ENCODE measurements at regions of chr6 and their contacts with region 1.

Region 1: DNA sequence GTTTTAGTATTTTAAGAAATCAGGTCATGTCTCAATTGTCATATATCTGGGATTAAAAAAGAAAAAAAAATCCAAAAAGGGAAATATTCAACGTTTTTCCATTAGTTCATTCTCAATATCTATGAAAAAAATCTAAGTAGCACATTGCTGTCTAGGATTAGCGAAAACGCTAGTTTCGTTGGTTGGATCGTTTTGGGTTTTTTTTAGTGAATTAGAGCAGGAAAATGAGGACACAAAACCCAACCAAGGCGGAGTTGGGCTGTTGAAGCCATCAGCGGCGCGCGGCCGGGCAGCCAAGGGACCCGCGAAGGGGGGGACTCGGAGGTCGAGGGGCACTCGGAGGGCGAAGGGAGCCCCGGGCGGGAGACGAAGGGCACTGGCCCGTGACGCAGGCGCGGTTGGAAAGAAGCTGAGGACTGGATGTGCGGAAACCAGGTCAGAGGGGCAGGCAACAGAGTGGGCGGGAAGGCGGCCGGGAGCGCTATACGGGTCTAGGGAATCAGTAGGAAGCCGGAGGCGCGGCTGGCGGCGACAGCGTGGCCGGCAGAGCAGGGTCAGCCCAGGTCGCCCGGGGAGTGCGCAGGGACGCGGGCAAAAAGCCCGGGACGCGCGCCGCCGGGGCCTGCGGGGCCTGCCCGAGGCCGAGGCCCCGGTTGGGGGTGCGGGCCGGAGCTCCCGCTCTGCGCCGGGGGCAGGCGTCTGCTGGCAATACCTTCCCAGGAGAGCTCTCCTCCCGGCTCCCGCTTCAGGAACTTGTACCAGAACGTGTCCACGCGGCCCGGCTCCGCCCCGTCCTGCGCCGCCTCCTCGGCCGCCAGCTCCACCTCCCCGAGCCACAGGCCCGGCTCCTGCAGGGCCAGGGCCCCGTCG is 599 bp downstream of the EPM2A start:
- DNase-seq: peak; percentile 71
- H3K4me3 Mint-ChIP-seq: peak overlapping the region; percentile 90
- H3K27ac Mint-ChIP-seq: peak overlapping the region; percentile 88
- H3K4me1 Mint-ChIP-seq: peaks cover 21% of the 10 kb centered on the region
- H3K27me3 Mint-ChIP-seq: no peaks in the 10 kb centered on the region

Region 2: DNA sequence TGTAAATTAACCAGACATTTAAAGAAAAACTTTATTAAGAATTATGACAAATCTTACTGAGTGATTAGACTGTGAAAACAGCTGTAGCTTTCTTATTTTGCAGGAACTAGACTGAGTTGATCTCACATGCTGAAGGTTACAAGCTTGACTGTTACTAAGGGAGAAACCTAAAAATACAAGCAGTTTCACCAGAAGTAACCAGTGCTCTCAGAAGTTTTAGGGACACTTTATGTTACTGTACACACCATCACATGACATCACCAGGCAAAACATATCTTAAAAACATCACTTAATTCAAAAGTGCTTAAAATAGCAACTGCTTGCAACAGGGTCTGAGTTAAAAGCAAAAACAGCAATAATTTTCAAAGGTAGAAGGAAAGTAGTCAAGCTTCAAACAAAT is 74.5 kb after region 1 on chr6:
- CTCF ChIA-PET with region 1: interaction called, 7 read pairs
- POLR2A ChIA-PET with region 1: interaction called, 84 read pairs
- DNase-seq: no peak
- H3K4me3 Mint-ChIP-seq: no peak overlapping the region
- H3K27ac Mint-ChIP-seq: no peak overlapping the region
- H3K4me1 Mint-ChIP-seq: peaks cover 18% of the 10 kb centered on the region
- H3K27me3 Mint-ChIP-seq: no peaks in the 10 kb centered on the region

Region 3: GRCh38 chr6:145814501-145815308 is 80.0 kb after region 1 on chr6 and contains the start of gene FBXO30:
- CTCF ChIA-PET with region 1: interaction called, 7 read pairs
- POLR2A ChIA-PET with region 1: interaction called, 84 read pairs
- DNase-seq: peak; percentile 90
- H3K4me3 Mint-ChIP-seq: peak within 1 kb of the TSS; percentile 91
- H3K27ac Mint-ChIP-seq: peak within 1 kb of the TSS; percentile 88
- H3K4me1 Mint-ChIP-seq: peaks cover 29% of the 10 kb centered on the region
- H3K27me3 Mint-ChIP-seq: no peaks in the 10 kb centered on the region
- total RNA-seq, gene FBXO30: 5.0 to 5.5 TPM

Region 4: GRCh38 chr6:145866456-145867396 is 132.0 kb after region 1 on chr6:
- CTCF ChIA-PET with region 1: no interaction called
- POLR2A ChIA-PET with region 1: interaction called, 23 read pairs
- DNase-seq: no peak
- H3K4me3 Mint-ChIP-seq: peak overlapping the region; percentile 30
- H3K27ac Mint-ChIP-seq: peak overlapping the region; percentile 34
- H3K4me1 Mint-ChIP-seq: peaks cover 31% of the 10 kb centered on the region
- H3K27me3 Mint-ChIP-seq: no peaks in the 10 kb centered on the region

Region 5: DNA sequence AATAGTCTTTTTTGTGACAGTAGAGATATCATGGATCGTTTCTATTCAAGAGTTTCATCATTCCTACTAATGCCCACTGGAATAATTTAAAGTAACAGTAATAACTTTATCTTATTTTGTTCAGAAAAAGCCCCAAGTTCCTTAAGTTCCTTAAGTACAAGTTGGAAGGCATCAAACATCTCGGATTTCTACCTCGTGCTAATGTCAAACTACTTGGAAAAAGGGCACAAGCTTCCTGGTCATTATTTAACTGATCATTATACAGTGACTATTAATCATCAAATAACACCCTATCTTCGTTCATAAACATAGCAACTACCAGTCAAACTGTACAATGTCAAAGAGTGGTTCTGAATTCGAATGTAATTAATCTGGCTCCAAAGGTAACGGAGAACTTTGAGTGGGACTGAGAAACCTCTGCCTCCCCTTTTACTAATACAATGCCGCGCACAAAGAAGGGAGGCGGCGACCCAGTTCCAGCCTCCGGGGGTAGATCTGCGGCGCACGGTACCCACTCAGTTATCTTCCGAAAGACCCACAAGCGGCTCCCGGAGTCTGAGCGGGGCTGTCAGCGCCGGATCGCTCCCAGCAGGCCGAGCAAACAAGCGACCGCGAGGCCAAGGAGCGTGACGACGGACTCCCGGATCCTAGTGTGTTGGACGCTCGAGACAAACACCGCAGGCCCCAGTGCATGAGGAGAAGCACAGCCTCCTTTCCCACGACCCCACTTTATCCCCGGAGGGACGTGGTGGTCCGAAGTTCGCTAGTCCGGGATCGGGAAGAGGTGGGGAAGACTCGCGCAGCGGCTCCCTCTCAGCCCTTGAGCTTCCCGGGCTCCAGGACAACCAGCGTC is 228.7 kb after region 1 on chr6:
- CTCF ChIA-PET with region 1: interaction called, 4 read pairs
- POLR2A ChIA-PET with region 1: interaction called, 18 read pairs
- DNase-seq: peak; percentile 45
- H3K4me3 Mint-ChIP-seq: peak overlapping the region; percentile 94
- H3K27ac Mint-ChIP-seq: peak overlapping the region; percentile 85
- H3K4me1 Mint-ChIP-seq: peaks cover 34% of the 10 kb centered on the region
- H3K27me3 Mint-ChIP-seq: no peaks in the 10 kb centered on the region